Activated CD4-positive, alpha-beta memory T cell treated with anti-CD3 and anti-CD28 coated beads for 36 hours (primary cell): ENCODE measurements at regions of chr9 and their contacts with region 1.

Region 1: DNA sequence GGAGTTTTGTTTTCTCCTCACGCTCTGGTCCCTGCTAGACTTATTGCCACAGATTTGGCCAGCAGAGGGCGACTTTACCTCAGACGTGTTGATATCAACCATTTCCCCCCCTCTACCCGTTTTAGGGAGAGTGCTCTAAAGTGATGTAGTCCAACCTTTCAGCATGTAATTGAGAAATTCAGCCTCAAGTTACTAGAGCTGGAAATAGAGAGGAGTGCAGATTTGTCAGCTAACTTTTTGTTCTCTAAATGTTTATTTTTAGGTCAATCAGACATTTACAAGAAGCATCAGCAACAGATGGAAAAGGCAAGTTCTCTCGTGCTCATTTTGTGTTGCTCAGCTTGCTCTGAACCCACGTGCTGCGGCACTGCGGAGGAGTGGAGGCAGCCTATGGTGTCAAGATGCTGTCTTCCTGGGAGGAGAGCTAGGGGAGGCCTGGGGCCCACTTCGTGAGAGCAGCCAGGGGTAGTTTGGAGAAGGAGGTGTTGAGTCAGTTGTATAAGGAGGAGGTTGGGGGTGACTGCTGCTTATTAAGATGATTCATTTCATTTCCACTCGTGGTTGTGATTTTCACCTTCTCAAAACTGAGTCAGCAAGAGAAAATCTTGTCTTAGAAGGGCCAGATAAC is 53.6 kb downstream of the GPR107 start:
- DNase-seq: peak; percentile 89
- H3K4me3 Mint-ChIP-seq: no peak overlapping the region
- H3K27ac Mint-ChIP-seq: peak overlapping the region; percentile 82
- H3K4me1 Mint-ChIP-seq: peaks cover 41% of the 10 kb centered on the region
- H3K27me3 Mint-ChIP-seq: no peaks in the 10 kb centered on the region

Region 2: DNA sequence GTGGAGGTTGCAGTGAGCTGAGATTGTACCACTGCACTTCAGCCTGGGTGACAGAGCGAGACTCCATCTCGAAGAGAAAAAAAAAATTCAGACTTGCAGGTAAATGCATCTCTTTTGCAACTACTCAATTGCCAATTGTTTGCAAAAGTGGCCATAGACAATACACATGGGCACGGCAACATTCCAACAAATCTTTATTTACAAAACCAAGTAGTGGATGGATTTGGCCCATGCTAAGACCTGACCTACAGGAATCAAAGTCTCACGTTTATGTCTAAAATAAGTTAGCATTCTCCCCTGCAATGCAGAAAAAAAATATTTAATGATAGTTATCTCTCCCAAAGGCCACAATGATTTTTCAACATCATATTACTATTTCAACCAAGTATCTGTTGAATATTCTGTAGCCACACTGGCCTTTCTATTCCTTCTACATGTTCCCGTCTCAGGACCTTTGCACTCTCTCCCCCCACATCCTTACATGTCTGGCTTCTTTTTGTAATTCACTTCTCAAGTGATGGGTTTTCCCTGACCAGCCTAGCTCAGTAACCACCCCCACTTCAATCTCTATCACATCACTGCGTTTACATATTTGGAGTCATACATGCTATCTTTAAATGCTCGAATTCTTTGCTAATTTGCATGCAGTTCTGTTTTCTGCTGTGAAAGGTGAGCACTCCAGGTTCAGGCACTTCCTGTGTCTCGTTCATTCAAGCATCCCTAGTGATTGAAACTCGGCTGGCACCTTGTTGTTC is 118.6 kb before region 1 on chr9:
- CTCF ChIA-PET with region 1: no interaction called
- POLR2A ChIA-PET with region 1: no interaction called
- intact Hi-C with region 1: no loop called
- DNase-seq: peak; percentile 51
- H3K4me3 Mint-ChIP-seq: peak overlapping the region; percentile 10
- H3K27ac Mint-ChIP-seq: peak overlapping the region; percentile 87
- H3K4me1 Mint-ChIP-seq: peaks cover 78% of the 10 kb centered on the region
- H3K27me3 Mint-ChIP-seq: no peaks in the 10 kb centered on the region

Region 3: DNA sequence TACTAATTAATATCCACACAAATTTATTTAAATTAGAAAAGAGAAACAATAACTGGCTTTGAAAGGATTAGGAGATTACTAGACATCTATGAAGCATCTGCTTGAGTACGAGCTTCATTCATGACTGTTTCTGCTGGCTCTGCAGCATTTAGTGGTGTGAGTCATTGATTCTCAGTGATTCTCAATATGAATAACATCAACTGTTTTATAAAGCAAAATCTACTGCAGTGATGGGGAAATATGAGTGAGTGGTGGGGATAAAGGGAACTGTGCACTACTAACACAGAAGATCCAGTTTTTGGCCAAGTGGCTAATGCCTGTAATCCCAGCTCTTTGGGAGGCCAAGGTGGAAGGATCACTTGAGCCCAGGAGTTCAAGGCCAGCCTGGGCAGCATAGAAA is 72.8 kb before region 1 on chr9:
- CTCF ChIA-PET with region 1: no interaction called
- POLR2A ChIA-PET with region 1: no interaction called
- intact Hi-C with region 1: no loop called
- DNase-seq: peak; percentile 54
- H3K4me3 Mint-ChIP-seq: peak overlapping the region; percentile 49
- H3K27ac Mint-ChIP-seq: peak overlapping the region; percentile 96
- H3K4me1 Mint-ChIP-seq: peaks cover 81% of the 10 kb centered on the region
- H3K27me3 Mint-ChIP-seq: no peaks in the 10 kb centered on the region

Region 4: DNA sequence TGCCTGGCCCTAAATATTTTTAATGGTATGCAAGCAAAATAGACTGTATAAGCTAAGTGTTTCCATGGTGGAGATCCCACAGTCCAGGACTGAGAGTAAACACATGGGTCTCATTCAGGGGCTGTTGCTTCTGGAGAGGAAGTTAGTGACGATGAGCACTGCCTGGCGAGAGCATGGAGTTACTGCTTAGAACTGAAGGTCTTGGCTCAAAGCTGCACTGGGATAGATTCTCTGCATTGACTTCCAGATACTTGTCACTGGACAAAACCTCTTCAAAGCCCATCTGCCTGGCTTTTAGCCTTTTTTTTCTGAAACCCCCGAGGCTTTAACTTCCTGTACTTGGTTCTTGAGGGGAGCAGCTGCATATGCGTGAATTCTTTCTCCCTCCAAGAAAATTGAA is 14.4 kb before region 1 on chr9:
- CTCF ChIA-PET with region 1: interaction called, 11 read pairs
- POLR2A ChIA-PET with region 1: no interaction called
- intact Hi-C with region 1: no loop called
- DNase-seq: no peak
- H3K4me3 Mint-ChIP-seq: no peak overlapping the region
- H3K27ac Mint-ChIP-seq: peak overlapping the region; percentile 21
- H3K4me1 Mint-ChIP-seq: peaks cover 13% of the 10 kb centered on the region
- H3K27me3 Mint-ChIP-seq: no peaks in the 10 kb centered on the region

Region 5: GRCh38 chr9:130128733-130129431 is 21.5 kb after region 1 on chr9:
- CTCF ChIA-PET with region 1: interaction called, 49 read pairs
- POLR2A ChIA-PET with region 1: interaction called, 7 read pairs
- intact Hi-C with region 1: loop called (anchors 1 kb)
- DNase-seq: peak; percentile 78
- H3K4me3 Mint-ChIP-seq: peak overlapping the region; percentile 71
- H3K27ac Mint-ChIP-seq: peak overlapping the region; percentile 98
- H3K4me1 Mint-ChIP-seq: peaks cover 49% of the 10 kb centered on the region
- H3K27me3 Mint-ChIP-seq: no peaks in the 10 kb centered on the region

Region 6: DNA sequence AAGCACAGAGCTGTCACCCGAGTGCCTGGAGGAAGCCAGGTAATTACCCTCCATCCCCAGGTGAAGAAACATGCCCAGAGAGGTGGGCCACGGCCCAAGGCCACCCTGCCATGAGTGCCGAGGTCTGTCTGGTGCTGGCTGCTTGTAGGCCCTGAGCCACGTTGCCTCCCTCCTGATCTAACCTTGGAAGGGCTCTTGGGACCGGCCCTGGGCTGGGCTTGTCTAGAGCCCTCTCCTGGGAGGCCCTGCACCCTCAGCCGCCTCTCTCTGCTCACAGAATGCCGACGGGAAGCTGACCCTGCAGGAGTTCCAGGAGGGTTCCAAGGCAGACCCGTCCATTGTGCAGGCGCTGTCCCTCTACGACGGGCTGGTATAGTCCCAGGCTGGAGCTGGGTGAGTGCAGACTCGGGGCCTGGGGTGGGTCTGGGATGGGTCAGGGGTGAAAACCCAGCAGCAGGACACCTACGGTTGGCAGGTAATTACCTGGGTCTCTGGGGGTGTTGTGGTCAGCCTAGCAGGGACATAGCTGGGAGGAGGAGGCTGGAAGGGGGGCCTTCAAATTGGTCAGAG is 118.8 kb after region 1 on chr9:
- CTCF ChIA-PET with region 1: interaction called, 12 read pairs
- POLR2A ChIA-PET with region 1: no interaction called
- intact Hi-C with region 1: no loop called
- DNase-seq: no peak
- H3K4me3 Mint-ChIP-seq: no peak overlapping the region
- H3K27ac Mint-ChIP-seq: no peak overlapping the region
- H3K4me1 Mint-ChIP-seq: no peaks in the 10 kb centered on the region
- H3K27me3 Mint-ChIP-seq: no peaks in the 10 kb centered on the region

Region 7: DNA sequence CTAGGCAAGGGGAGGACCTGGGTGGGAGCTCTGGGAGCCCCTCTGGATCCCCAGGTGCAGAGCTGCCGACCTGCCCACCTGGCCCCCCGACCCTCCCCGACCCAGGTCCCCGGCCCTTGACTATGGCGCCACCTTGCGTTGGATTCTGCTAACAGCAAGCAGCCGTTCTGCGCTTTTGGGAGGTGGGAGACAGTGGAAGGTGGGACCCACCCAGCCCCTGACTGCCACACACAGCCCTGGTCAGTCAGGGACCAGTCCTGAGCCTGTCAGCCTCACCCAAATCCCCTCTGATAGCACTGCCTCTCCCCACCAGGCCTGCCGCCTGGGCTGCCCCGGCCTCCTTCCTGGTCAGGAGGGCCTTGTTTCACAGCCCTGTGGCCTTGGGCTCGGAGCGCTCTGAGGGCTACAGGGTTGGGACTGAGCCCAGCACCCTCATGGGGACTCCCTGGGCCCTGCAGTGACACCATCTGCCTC is 236.1 kb after region 1 on chr9:
- CTCF ChIA-PET with region 1: interaction called, 8 read pairs
- POLR2A ChIA-PET with region 1: no interaction called
- intact Hi-C with region 1: loop called (anchors 1 kb)
- DNase-seq: peak; percentile 45
- H3K4me3 Mint-ChIP-seq: no peak overlapping the region
- H3K27ac Mint-ChIP-seq: no peak overlapping the region
- H3K4me1 Mint-ChIP-seq: no peaks in the 10 kb centered on the region
- H3K27me3 Mint-ChIP-seq: no peaks in the 10 kb centered on the region